HEK293 (cell line): ENCODE measurements at regions of chr6 and their contacts with region 1.

Region 1: GRCh38 chr6:100105138-100105753 is 111.2 kb upstream of the MCHR2 start:
- H3K4me3 ChIP-seq: no peak overlapping the region
- H3K27ac ChIP-seq: no peak overlapping the region
- H3K4me1 ChIP-seq: no peaks in the 10 kb centered on the region
- CTCF ChIP-seq: no peak

Region 2: DNA sequence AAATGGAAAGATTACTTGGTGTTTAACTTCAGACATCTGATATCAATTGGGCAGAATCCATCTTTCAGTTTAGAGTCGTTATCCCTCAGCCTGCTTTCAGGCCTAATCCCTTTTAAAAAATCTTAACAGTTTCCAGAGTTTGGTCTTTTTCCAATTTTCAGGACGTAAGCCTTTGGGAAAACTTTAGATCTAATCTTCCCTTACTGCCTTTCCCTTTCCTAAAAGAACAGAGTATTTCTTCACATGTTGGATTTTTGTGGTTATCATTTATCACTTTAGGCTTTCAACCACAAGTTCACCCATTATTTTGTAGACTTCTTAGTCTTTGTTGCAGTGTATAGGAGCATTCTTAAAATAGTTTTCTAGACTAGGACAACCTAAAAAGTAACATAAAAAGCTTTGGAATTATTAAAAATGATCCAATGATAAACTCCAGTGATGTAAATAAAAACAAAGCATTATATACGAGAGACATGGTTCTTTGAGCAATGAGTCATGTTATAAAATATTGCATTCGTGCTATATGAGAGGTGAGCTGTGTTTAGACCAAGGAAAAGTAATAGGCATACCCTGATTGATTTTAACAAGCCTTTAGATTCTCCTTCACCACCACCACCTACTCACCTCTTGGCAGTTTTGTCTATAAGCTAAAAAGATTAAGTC is 20.8 kb before region 1 on chr6:
- CTCF ChIA-PET with region 1: interaction called, 15 read pairs
- POLR2A ChIA-PET with region 1: no interaction called
- H3K4me3 ChIP-seq: no peak overlapping the region
- H3K27ac ChIP-seq: no peak overlapping the region
- H3K4me1 ChIP-seq: no peaks in the 10 kb centered on the region
- CTCF ChIP-seq: no peak

Region 3: GRCh38 chr6:100493227-100493911 is 388.1 kb after region 1 on chr6:
- CTCF ChIA-PET with region 1: interaction called, 10 read pairs
- POLR2A ChIA-PET with region 1: no interaction called
- H3K4me3 ChIP-seq: no peak overlapping the region
- H3K27ac ChIP-seq: no peak overlapping the region
- H3K4me1 ChIP-seq: no peaks in the 10 kb centered on the region
- CTCF ChIP-seq: no peak

Region 4: DNA sequence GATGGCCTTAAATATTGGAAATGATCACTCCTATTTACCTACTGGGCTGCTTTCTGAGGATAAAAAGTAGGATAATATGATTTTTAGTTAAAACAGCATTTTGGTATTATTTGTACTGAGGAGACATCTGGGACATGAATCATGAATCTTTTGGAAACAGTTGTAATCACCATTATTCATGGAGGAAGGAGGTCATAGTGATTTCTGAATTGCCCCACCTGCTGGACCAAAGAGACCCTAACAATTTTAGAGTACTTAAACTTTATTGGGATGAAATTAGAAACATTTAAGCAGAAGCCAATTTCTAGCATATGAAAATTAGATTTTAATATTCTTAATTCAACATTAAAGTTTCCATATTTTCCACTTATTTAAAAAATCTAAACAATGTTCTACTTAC is 467.9 kb after region 1 on chr6:
- CTCF ChIA-PET with region 1: interaction called, 10 read pairs
- POLR2A ChIA-PET with region 1: no interaction called
- H3K4me3 ChIP-seq: no peak overlapping the region
- H3K27ac ChIP-seq: no peak overlapping the region
- H3K4me1 ChIP-seq: no peaks in the 10 kb centered on the region
- CTCF ChIP-seq: no peak

Region 5: GRCh38 chr6:100657678-100658330 is 552.6 kb after region 1 on chr6:
- CTCF ChIA-PET with region 1: interaction called, 40 read pairs
- POLR2A ChIA-PET with region 1: no interaction called
- H3K4me3 ChIP-seq: no peak overlapping the region
- H3K27ac ChIP-seq: no peak overlapping the region
- H3K4me1 ChIP-seq: no peaks in the 10 kb centered on the region
- CTCF ChIP-seq: peak; percentile 78

Region 6: DNA sequence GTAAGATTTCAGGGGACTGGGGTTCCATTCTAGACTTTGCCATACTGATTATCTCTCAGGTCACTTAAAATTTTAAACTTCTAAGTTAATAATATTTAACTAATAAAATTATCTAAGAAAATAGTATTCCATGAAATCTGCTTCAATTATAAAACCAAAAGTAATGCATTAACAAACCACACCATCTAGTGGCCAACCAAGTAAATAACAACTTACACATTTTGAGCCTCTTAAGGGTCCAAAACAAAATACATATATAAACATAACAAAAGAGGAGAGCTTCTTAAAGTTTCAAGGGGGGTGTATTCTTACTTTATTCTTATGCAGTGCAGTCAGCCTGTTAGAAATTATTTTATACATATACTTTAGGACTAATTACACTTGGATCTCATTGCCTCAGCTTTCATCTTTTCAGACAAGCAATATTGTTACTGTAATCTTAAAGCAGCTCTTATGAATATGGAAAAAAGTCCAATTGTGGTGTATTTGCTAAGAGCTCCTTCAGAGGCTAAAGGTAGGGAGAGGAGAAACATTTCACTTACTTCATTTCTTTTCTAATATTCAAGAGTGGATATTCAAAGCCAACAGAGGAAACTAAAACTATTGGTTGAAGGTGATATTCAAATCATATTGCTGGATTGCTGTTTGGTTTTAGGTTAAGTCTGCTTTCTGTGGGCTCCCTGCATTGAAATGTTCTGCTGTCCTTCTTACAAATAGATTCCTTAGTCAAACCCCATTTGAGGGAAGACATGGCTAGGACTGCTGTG is 559.2 kb after region 1 on chr6:
- CTCF ChIA-PET with region 1: interaction called, 40 read pairs
- POLR2A ChIA-PET with region 1: no interaction called
- H3K4me3 ChIP-seq: no peak overlapping the region
- H3K27ac ChIP-seq: no peak overlapping the region
- H3K4me1 ChIP-seq: no peaks in the 10 kb centered on the region
- CTCF ChIP-seq: no peak